Activated CD4-positive, alpha-beta T cell treated with anti-CD3 and anti-CD28 coated beads for 36 hours (primary cell): ENCODE measurements at regions of chr19 and their contacts with region 1.

Region 1: DNA sequence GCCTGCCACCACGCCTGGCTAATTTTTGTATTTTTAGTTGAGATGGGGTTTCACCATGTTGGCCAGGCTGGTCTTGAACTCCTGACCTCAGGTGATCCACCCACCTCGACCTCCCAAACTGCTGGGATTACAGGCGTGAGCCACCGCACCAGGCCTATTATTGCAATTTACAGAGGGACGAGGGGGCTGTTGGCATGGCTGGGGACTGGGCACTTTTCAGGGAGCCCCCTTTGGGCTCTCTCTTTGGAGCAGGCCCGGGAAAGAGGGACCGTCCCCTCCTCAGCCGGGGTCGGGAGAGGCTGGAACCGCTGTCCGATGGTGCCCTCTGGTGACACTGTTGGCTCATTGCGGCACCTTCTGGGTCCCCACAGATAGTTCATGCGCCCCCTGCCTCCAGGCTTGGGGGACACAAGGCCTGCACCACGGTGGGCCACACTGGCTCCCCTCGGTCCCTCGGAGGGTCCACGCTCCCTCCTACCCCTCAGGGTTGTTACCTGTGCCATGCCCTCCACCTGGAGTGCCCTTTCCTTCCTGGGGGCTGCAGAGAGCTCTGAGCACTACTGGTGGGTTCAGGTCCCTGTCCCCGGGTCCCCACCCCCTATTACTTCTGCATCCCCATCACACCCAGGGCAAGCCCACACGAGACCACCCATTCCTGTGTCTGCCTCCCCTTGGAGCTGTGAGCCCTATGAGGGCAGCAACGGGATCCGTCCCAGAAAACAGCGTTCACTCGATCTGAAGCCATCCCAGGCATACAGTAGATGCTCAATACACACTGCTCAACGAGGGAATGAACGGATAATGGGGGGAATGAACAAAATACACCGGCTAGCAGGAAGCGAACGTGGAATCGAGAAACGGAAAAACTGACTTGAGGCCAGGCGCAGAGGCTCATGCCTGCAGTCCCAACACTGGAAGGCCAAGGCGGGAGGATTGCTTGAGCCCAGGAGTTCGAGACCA is 12.5 kb downstream of the FEM1A start:
- DNase-seq: peak; percentile 85
- ATAC-seq: peak; percentile 95
- H3K4me3 Mint-ChIP-seq: no peak overlapping the region
- H3K27ac Mint-ChIP-seq: no peak overlapping the region
- H3K4me1 Mint-ChIP-seq: no peaks in the 10 kb centered on the region
- H3K27me3 Mint-ChIP-seq: no peaks in the 10 kb centered on the region

Region 2: DNA sequence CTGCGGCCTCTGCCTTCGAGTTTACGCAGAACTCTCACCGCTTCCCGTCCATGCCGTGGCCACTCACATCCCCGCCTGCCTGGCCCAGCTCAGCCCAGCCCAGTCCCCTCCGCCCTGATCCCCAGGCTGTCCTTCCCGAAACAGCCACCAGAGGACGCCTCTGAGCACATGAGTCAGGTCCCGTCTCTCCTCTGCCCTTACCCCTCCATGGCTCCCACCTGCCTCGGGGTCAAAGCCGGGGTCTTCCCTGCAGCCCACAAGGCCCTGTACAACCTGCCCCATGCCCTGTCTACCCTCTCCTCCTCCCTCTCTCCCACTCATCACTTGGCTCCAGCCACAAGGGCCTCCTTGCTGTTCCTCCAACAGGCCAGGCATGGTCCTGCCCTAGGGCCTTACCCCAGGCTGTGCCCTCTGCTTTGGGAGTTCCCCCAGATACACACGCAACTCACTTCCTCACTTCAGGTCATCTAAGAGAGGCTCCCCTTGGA is 236.4 kb before region 1 on chr19:
- CTCF ChIA-PET with region 1: no interaction called
- POLR2A ChIA-PET with region 1: no interaction called
- intact Hi-C with region 1: loop called in 1 of 2 experiments (anchors 5 kb)
- DNase-seq: peak; percentile 85
- ATAC-seq: peak; percentile 94
- H3K4me3 Mint-ChIP-seq: no peak overlapping the region
- H3K27ac Mint-ChIP-seq: no peak overlapping the region
- H3K4me1 Mint-ChIP-seq: no peaks in the 10 kb centered on the region
- H3K27me3 Mint-ChIP-seq: peaks cover 4% of the 10 kb centered on the region

Region 3: GRCh38 chr19:4713384-4713951 is 90.5 kb before region 1 on chr19:
- CTCF ChIA-PET with region 1: no interaction called
- POLR2A ChIA-PET with region 1: no interaction called
- intact Hi-C with region 1: no loop called
- DNase-seq: no peak
- ATAC-seq: no peak
- H3K4me3 Mint-ChIP-seq: no peak overlapping the region
- H3K27ac Mint-ChIP-seq: no peak overlapping the region
- H3K4me1 Mint-ChIP-seq: peaks cover 7% of the 10 kb centered on the region
- H3K27me3 Mint-ChIP-seq: no peaks in the 10 kb centered on the region

Region 4: GRCh38 chr19:4732680-4733114 is 71.3 kb before region 1 on chr19:
- CTCF ChIA-PET with region 1: interaction called, 20 read pairs
- POLR2A ChIA-PET with region 1: no interaction called
- intact Hi-C with region 1: loop called (anchors 1 kb)
- DNase-seq: peak; percentile 76
- ATAC-seq: peak; percentile 90
- H3K4me3 Mint-ChIP-seq: no peak overlapping the region
- H3K27ac Mint-ChIP-seq: no peak overlapping the region
- H3K4me1 Mint-ChIP-seq: peaks cover 4% of the 10 kb centered on the region
- H3K27me3 Mint-ChIP-seq: peaks cover 4% of the 10 kb centered on the region

Region 5: GRCh38 chr19:4776436-4777205 is 27.4 kb before region 1 on chr19:
- CTCF ChIA-PET with region 1: no interaction called
- POLR2A ChIA-PET with region 1: no interaction called
- intact Hi-C with region 1: no loop called
- DNase-seq: no peak
- ATAC-seq: no peak
- H3K4me3 Mint-ChIP-seq: no peak overlapping the region
- H3K27ac Mint-ChIP-seq: no peak overlapping the region
- H3K4me1 Mint-ChIP-seq: no peaks in the 10 kb centered on the region
- H3K27me3 Mint-ChIP-seq: peaks cover 15% of the 10 kb centered on the region